ENCODE measurements at regions of chr20 and their contacts with region 1.

Region 1: GRCh38 chr20:10219452-10219791 is 792 bp downstream of the SNAP25 start:
- DNase-seq: peak; percentile 69
- H3K4me3 Mint-ChIP-seq: peak overlapping the region; percentile 79
- H3K27ac Mint-ChIP-seq: no peak overlapping the region
- H3K4me1 Mint-ChIP-seq: peaks cover 33% of the 10 kb centered on the region
- H3K27me3 Mint-ChIP-seq: peaks cover 5% of the 10 kb centered on the region

Region 2: GRCh38 chr20:9945408-9945807 is 274.0 kb before region 1 on chr20:
- intact Hi-C with region 1: no loop called
- DNase-seq: no peak
- H3K4me3 Mint-ChIP-seq: no peak overlapping the region
- H3K27ac Mint-ChIP-seq: no peak overlapping the region
- H3K4me1 Mint-ChIP-seq: no peaks in the 10 kb centered on the region
- H3K27me3 Mint-ChIP-seq: no peaks in the 10 kb centered on the region

Region 3: GRCh38 chr20:10171864-10172751 is 47.3 kb before region 1 on chr20:
- intact Hi-C with region 1: loop called (anchors 1 kb)
- DNase-seq: no peak
- H3K4me3 Mint-ChIP-seq: peak overlapping the region; percentile 79
- H3K27ac Mint-ChIP-seq: peak overlapping the region; percentile 53
- H3K4me1 Mint-ChIP-seq: peaks cover 7% of the 10 kb centered on the region
- H3K27me3 Mint-ChIP-seq: peaks cover 29% of the 10 kb centered on the region

Region 4: DNA sequence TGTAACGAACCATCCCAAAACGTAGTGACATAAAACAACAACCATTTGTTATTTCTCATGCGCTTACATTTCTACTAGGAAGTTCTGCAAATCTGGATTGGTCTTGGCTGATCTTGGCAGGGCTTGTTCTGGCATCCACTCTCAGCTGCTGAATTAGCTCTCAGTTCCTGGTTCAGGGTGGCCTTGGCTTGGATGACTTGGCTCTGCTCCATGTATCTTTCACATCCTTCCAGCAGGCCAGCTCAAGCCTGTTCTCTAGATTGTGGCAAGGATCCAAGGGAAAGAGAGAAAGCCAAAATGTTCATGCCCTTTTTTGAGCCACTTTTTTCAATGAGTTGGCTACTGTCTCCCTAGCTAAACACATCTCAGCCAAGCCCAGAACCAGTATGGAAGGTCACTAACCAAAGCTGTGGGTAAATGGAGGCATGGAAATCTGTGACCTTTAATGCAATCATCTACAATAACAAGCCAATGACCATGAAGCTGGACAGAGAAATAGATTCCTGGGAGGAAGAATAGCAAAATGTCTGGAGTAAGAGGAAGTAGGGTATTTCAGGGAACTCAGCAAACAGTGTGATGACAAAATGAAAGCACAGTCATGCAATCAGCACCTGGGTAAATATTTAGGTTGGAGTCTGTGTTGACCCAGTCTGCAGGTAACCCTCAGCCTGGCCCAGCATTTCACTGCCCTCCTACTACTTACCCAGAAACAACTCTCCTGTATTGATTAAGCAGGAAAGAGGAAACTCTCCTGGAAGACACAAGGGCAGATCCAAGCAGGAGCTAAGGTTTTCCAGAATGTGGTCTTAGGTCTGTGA is 33.5 kb before region 1 on chr20:
- intact Hi-C with region 1: no loop called
- DNase-seq: no peak
- H3K4me3 Mint-ChIP-seq: no peak overlapping the region
- H3K27ac Mint-ChIP-seq: no peak overlapping the region
- H3K4me1 Mint-ChIP-seq: no peaks in the 10 kb centered on the region
- H3K27me3 Mint-ChIP-seq: no peaks in the 10 kb centered on the region

Region 5: DNA sequence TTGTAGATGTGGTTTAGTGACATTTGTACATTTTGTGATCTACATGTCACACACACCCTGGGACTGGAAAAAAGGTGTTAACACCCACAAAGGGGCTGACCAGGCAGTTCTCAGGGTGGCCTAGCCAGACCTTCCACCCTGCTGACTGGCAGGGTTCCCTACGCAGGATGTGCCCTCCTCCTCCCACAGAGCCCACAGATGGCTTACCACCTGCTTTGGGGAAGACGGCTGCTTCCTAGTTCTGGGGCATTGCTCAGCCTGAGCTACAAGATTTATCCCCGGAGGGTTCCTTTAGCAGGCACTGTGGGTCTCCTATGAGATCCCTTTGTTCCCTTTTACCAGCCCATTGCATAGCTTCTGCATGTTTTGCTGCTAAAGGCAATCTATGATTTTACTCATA is 34.4 kb after region 1 on chr20:
- intact Hi-C with region 1: no loop called
- DNase-seq: no peak
- H3K4me3 Mint-ChIP-seq: no peak overlapping the region
- H3K27ac Mint-ChIP-seq: no peak overlapping the region
- H3K4me1 Mint-ChIP-seq: no peaks in the 10 kb centered on the region
- H3K27me3 Mint-ChIP-seq: no peaks in the 10 kb centered on the region

Region 6: GRCh38 chr20:10350188-10350842 is 130.9 kb after region 1 on chr20:
- intact Hi-C with region 1: loop called (anchors 2 kb)
- DNase-seq: no peak
- H3K4me3 Mint-ChIP-seq: peak overlapping the region; percentile 11
- H3K27ac Mint-ChIP-seq: peak overlapping the region; percentile 84
- H3K4me1 Mint-ChIP-seq: peaks cover 27% of the 10 kb centered on the region
- H3K27me3 Mint-ChIP-seq: no peaks in the 10 kb centered on the region

Region 7: GRCh38 chr20:10511509-10512251 is 292.3 kb after region 1 on chr20:
- intact Hi-C with region 1: loop called (anchors 5 kb)
- DNase-seq: peak; percentile 67
- H3K4me3 Mint-ChIP-seq: peak overlapping the region; percentile 9
- H3K27ac Mint-ChIP-seq: peak overlapping the region; percentile 75
- H3K4me1 Mint-ChIP-seq: peaks cover 57% of the 10 kb centered on the region
- H3K27me3 Mint-ChIP-seq: no peaks in the 10 kb centered on the region

Measured in activated T-helper 2 cell treated with anti-CD3 and anti-CD28 coated beads, Interferon-gamma antibody, Interleukin-2, Interleukin-4, amounts not matched to agents 10 μg/mL and 5 μg/mL and 100 μg/mL, durations not matched to agents 14 hours and 24 hours and 36 hours (primary cell).